ENCODE measurements at regions of chr9 and their contacts with region 1.

Region 1: DNA sequence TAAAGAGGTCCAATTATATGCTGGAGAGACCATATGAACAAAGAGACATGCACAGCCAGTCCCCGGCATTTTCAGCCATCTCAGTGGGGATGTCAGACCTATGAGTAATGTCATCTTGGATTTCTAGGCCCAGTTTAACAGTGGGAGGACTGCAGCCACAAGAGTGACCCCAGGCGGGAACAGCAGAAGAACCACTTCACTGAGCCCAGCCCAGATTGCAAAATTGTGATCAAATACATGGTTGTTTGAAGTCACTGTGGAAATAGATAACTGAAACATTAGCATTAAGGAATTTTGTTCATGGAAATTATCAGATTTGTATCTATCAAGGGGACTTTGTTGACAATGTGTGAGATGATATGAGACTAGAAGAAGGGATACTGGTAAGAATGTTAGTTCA is 42.1 kb upstream of the C9orf57 start:
- DNase-seq: no peak
- H3K4me3 ChIP-seq: no peak overlapping the region
- H3K27ac ChIP-seq: no peak overlapping the region
- H3K4me1 ChIP-seq: no peaks in the 10 kb centered on the region
- H3K27me3 ChIP-seq: no peaks in the 10 kb centered on the region
- CTCF ChIP-seq: no peak

Region 2: GRCh38 chr9:71895117-71895516 is 207.4 kb before region 1 on chr9:
- CTCF ChIA-PET with region 1: interaction called, 14 read pairs
- POLR2A ChIA-PET with region 1: no interaction called
- intact Hi-C with region 1: no loop called
- DNase-seq: no peak
- H3K4me3 ChIP-seq: no peak overlapping the region
- H3K27ac ChIP-seq: 0 out of 2 replicates have a peak overlapping the region, but pooled peaks have one; percentile 21
- H3K4me1 ChIP-seq: no peaks in the 10 kb centered on the region
- H3K27me3 ChIP-seq: no peaks in the 10 kb centered on the region
- CTCF ChIP-seq: no peak

Region 3: GRCh38 chr9:71955300-71955915 is 147.1 kb before region 1 on chr9:
- CTCF ChIA-PET with region 1: no interaction called
- POLR2A ChIA-PET with region 1: no interaction called
- intact Hi-C with region 1: no loop called
- DNase-seq: no peak
- H3K4me3 ChIP-seq: no peak overlapping the region
- H3K27ac ChIP-seq: no peak overlapping the region
- H3K4me1 ChIP-seq: no peaks in the 10 kb centered on the region
- H3K27me3 ChIP-seq: no peaks in the 10 kb centered on the region
- CTCF ChIP-seq: no peak

Region 4: DNA sequence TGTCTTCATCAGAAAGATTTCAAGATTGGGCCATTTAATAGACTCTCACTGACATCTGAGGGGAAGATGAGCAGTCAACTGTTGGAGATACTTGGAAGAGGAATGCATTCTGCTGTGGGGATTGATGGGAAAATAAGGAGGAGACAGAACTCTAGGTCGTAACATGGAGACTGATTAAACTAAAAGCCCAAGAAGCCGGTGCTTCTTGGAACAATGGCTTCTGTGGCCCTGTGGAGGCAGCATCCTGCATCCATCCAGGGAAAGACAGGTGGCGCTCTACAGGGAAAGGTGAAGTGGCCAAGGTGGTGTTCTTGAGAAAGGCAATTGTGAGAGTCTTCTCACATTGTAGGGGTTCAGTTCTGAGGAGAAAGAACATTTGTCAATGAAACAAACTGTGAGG is 231.2 kb after region 1 on chr9:
- CTCF ChIA-PET with region 1: no interaction called
- POLR2A ChIA-PET with region 1: no interaction called
- intact Hi-C with region 1: no loop called
- DNase-seq: no peak
- H3K4me3 ChIP-seq: no peak overlapping the region
- H3K27ac ChIP-seq: no peak overlapping the region
- H3K4me1 ChIP-seq: no peaks in the 10 kb centered on the region
- H3K27me3 ChIP-seq: no peaks in the 10 kb centered on the region
- CTCF ChIP-seq: no peak

Region 5: GRCh38 chr9:72396247-72397091 is 293.9 kb after region 1 on chr9:
- CTCF ChIA-PET with region 1: no interaction called
- POLR2A ChIA-PET with region 1: no interaction called
- intact Hi-C with region 1: no loop called
- DNase-seq: peak; percentile 4 to 96
- H3K4me3 ChIP-seq: peak overlapping the region; percentile 14; the same call in 1 of the 2 replicates
- H3K27ac ChIP-seq: peak overlapping the region; percentile 51
- H3K4me1 ChIP-seq: peaks cover 19% of the 10 kb centered on the region
- H3K27me3 ChIP-seq: no peaks in the 10 kb centered on the region
- CTCF ChIP-seq: no peak